Posterior vena cava (tissue), 2 donors: ENCODE measurements at regions of chr2 and their contacts with region 1.

Region 1: DNA sequence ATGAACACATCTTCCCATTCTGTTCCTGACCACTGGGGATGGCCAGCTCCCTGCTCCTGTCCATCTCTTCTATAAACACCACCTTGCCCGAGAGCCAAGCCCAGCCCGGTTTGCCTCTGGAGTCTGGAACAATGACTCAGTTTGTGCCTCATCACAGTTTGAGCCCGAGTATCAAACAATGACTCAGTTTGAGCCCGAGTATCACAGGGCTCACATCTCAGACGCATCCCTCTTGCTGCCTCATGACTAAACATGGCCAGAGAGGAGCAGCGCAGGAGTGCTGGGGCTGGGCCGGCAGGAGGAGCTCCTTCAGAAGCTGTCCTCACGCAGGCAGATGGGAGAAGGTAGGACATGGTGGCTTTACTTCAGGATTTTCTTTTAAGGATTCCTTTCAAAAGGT is 68.7 kb downstream of the PXDN start:
- DNase-seq: peak; percentile 92

Region 2: GRCh38 chr2:974502-974901 is 701.1 kb before region 1 on chr2:
- intact Hi-C with region 1: no loop called
- DNase-seq: no peak

Region 3: DNA sequence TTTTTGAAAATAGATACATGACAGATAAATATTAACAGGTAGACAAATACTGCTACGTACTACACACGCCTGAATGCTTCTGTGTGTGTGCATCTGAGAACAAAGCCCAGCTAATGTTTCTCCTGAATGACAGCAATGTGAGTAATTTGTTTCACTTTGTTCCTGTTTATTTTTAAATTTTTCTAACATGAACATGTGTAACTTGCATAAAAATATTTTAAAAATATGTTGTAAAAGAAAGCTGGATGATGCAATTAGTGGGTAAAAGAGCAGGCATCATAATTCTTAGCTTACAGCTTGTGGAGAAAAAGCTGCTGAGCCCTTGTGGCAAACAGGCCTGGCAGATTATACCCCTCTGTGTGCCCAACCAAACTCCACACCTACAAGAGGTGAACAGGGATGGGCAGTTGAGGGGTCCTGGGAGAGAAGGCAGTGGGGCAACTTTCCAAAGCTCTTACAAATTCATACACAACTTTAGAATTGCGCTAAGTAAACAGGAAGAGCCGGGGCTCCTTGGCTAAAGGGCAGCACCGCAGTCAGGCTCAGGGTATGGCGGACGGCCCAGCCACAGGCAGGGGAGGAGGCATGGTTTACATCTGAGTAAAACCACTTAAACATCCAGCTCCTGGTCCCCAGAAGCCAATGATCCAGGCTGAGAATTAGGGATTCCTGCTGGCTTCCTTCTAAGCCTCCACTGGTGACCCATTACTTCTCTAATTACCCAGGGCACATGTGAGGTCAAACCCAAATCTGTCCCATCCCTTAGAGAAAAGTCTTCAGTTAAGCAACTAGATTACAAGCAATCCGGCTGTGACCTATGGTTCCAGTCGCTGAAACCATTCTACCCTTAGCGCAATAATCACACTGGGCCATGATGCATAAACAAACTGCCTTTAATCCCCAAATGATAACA is 54.6 kb after region 1 on chr2:
- intact Hi-C with region 1: loop called in 1 of 2 experiments (anchors 10 kb)
- DNase-seq: no peak

Region 4: GRCh38 chr2:1823187-1824169 is 147.8 kb after region 1 on chr2:
- intact Hi-C with region 1: loop called in 1 of 2 experiments (anchors 10 kb)
- DNase-seq: no peak